A549 (cell line): ENCODE measurements at regions of chr9 and their contacts with region 1.

Region 1: GRCh38 chr9:84953797-84954705 is 284.5 kb downstream of the NTRK2 start:
- DNase-seq: peak; percentile 74 to 78
- ATAC-seq: peak; percentile 93 to 99
- H3K4me3 ChIP-seq: no peak overlapping the region
- H3K27ac ChIP-seq: 0 out of 6 replicates have a peak overlapping the region, but pooled peaks of 1 of the 2 experiments have one; percentile 17
- H3K4me1 ChIP-seq: no peaks in the 10 kb centered on the region
- CTCF ChIP-seq: peak; percentile 66
- EP300 ChIP-seq: no peak
- POLR2A ChIP-seq: no peak
- RAD21 ChIP-seq: peak; percentile 79 to 83

Region 2: GRCh38 chr9:84932915-84933527 is 21.0 kb before region 1 on chr9:
- CTCF ChIA-PET with region 1: interaction called, 11 read pairs
- POLR2A ChIA-PET with region 1: no interaction called
- DNase-seq: peak in 1 of 2 experiments; percentile 23
- ATAC-seq: peak in 1 of 2 experiments; percentile 49; a peak in 3 of 6 replicates
- H3K4me3 ChIP-seq: no peak overlapping the region
- H3K27ac ChIP-seq: no peak overlapping the region
- H3K4me1 ChIP-seq: no peaks in the 10 kb centered on the region
- CTCF ChIP-seq: peak; percentile 6; the same call in 1 of the 3 replicates
- EP300 ChIP-seq: no peak
- POLR2A ChIP-seq: no peak
- RAD21 ChIP-seq: peak in 1 of 2 experiments; percentile 12; a peak in 1 of 5 replicates

Region 3: GRCh38 chr9:84966876-84967833 is 13.1 kb after region 1 on chr9:
- CTCF ChIA-PET with region 1: interaction called, 10 read pairs
- POLR2A ChIA-PET with region 1: no interaction called
- DNase-seq: no peak
- ATAC-seq: peak in 1 of 2 experiments; percentile 43; a peak in 3 of 6 replicates
- H3K4me3 ChIP-seq: no peak overlapping the region
- H3K27ac ChIP-seq: no peak overlapping the region
- H3K4me1 ChIP-seq: peaks cover 29% of the 10 kb centered on the region
- CTCF ChIP-seq: no peak
- EP300 ChIP-seq: no peak
- POLR2A ChIP-seq: no peak
- RAD21 ChIP-seq: no peak

Region 4: GRCh38 chr9:85258823-85259370 is 304.8 kb after region 1 on chr9:
- CTCF ChIA-PET with region 1: interaction called, 12 read pairs
- POLR2A ChIA-PET with region 1: no interaction called
- DNase-seq: peak; percentile 60 to 74
- ATAC-seq: peak; percentile 95 to 98
- H3K4me3 ChIP-seq: no peak overlapping the region
- H3K27ac ChIP-seq: no peak overlapping the region
- H3K4me1 ChIP-seq: no peaks in the 10 kb centered on the region
- CTCF ChIP-seq: peak; percentile 44
- EP300 ChIP-seq: no peak
- POLR2A ChIP-seq: no peak
- RAD21 ChIP-seq: peak; percentile 71 to 88